AG04450 (cell line): ENCODE measurements at regions of chr11 and their contacts with region 1.

Region 1: DNA sequence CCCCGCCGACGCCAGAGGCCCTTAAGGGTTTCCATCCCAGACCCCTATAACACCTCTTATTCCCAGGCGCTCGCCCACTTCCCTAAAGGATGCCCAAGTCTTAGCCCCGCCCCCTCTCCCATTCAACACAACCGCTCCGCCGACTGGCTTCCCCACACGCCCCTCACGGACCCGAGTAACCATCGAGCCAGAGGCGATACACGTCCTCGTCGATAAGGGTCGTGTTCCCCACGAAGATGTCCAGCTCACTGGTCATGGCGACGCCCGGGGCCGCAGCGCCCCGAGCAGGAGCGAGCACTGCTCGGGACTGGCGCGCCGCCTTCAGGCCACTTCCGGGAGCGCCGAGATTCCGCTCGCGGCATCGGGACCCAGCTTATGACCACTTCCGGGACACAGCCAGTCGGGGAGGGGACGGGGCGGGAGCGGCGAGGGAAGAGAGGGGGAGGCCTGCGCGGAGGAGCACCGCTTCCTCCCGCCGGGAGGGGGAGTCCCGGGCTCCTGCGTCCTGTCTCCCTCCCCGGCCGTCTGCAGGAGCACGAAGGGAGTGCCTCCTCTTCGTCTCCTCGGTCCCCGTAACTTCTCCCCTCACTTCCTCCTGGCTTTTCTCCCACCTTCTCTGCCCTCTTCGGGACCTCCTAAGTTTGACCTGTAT is at the start of gene FIBP:
- DNase-seq: peak; percentile 94
- H3K4me3 ChIP-seq: peak within 1 kb of the TSS; percentile 90
- H3K27ac ChIP-seq: peak within 1 kb of the TSS; percentile 98
- H3K27me3 ChIP-seq: no peaks in the 10 kb centered on the region
- CTCF ChIP-seq: peak; percentile 74
- polyA plus RNA-seq, gene FIBP: 126 and 160 TPM in 2 replicates

Region 2: DNA sequence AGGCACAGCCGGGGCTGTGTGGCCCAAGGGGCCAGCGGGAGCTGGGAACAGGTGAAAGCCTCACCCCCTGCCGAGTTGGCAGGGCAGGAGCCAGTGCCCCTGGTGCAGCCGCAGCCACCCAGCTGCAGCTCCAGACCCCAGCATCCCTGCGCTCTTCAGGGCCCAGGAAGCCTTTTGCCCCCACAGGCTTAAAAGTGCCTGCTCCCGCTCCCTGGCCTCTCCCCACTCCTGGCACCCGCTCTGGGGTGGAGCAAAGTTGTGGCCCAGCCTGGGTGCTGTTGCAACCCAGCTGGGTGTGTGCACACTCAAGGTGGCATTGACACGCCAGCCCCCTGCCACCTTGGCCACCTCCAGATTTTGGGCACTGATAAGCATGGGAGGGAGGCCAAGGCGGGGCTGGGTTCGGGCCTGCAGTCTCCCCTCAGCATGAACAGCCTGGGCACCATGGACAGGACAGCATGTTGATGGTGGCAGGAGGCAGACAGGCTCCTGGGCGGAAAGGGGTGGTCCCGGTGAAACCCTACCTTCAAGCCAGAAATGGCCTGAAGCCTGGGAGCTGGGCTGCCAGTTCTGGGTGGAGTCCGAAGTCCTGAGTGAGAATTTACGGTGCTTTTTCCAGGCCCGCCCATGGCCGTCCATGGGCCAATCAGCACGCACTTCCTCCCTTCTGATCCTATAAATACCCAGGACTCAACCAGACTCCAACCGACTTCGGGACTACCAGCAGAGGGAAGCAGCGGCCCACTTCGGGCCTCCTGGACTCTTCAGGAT is 144.2 kb before region 1 on chr11:
- CTCF ChIA-PET with region 1: no interaction called
- POLR2A ChIA-PET with region 1: no interaction called
- DNase-seq: no peak
- H3K4me3 ChIP-seq: no peak overlapping the region
- H3K27ac ChIP-seq: no peak overlapping the region
- H3K27me3 ChIP-seq: peaks cover 13% of the 10 kb centered on the region
- CTCF ChIP-seq: 0 out of 2 replicates have a peak, but pooled peaks have one; percentile 7

Region 3: DNA sequence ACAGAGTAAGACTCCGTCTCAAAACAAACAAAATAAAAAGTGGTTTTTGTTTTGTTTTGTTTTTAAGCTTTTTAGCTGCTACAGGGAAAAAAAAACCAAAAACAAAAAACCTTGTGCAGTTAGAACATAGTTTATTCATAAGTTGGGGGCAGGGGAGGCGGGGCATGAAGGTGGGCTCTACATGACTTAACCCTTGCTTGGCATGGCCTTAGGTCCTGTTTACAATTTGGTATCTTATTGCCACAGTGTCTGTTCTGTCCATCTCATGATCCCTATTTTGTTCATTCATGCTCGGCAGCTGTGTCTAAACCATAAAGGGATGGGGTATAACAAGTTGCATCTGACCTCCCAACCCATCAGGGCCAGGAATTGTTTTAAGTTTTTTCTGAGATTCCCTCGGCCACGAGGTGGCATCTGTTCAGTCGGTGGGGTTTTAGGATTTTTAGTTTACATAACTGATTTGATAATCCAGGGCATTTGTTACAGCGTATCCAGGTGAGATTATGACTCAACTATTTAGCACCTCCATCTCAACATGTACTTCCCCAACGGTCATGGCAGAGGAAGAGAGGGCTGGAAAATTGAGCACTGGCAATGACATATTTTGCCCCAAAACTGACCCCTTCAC is 114.4 kb before region 1 on chr11:
- CTCF ChIA-PET with region 1: no interaction called
- POLR2A ChIA-PET with region 1: no interaction called
- DNase-seq: no peak
- H3K4me3 ChIP-seq: no peak overlapping the region
- H3K27ac ChIP-seq: no peak overlapping the region
- H3K27me3 ChIP-seq: no peaks in the 10 kb centered on the region
- CTCF ChIP-seq: peak; percentile 21; the same call in 1 of the 2 replicates

Region 4: GRCh38 chr11:65868076-65868667 is 20.1 kb before region 1 on chr11:
- CTCF ChIA-PET with region 1: interaction called, 51 read pairs
- POLR2A ChIA-PET with region 1: interaction called, 17 read pairs
- DNase-seq: no peak
- H3K4me3 ChIP-seq: no peak overlapping the region
- H3K27ac ChIP-seq: no peak overlapping the region
- H3K27me3 ChIP-seq: no peaks in the 10 kb centered on the region
- CTCF ChIP-seq: no peak

Region 5: DNA sequence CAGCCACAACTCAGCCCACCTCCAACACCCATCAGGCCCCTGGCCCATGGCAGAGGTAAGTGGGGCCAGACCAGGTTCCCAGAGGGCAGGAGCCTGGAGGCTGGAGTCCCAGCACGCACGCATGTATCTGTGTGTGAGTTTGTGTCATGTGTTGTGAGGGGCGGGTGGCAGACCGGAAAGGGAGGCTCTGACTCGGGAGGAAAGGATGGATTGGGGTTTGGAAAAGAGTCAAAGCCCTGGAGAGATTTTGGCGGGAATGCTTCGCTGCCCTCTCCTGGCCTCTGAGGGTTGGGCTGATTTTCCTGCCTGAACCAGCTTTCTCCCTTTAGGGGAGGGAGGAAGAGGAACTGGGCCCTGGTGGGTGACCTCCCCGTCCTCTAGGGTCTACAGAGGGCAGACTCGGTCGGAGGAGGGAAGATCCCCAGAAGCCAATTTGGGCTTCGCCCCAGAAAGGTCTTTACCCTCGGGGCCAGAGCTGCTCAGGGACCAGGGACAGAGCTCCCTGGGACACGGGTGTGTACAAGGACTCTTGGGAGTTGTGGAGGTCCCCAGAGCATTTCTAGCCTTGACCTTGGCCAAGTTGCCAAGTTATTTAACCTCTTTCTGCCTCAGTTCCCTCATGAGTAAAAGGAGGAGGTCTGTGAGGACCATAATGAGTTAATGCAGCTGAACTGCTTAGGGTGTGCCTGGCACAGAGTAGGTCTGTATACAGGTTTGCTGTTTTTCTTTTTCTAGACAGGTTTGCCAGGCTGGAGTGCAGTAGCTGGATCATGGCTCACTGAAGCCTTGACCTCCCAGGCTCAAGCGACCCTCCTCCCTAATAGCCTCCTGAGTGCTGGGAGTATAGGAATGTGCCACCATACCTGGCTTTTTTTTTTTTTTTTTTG is 23.6 kb after region 1 on chr11:
- CTCF ChIA-PET with region 1: interaction called, 15 read pairs
- POLR2A ChIA-PET with region 1: interaction called, 124 read pairs
- DNase-seq: no peak
- H3K4me3 ChIP-seq: no peak overlapping the region
- H3K27ac ChIP-seq: peak overlapping the region; percentile 91
- H3K27me3 ChIP-seq: no peaks in the 10 kb centered on the region
- CTCF ChIP-seq: peak; percentile 17; the same call in 1 of the 2 replicates

Region 6: GRCh38 chr11:65961232-65961901 is 73.1 kb after region 1 on chr11 and contains the start of gene SART1:
- CTCF ChIA-PET with region 1: interaction called, 21 read pairs
- POLR2A ChIA-PET with region 1: interaction called, 5 read pairs
- DNase-seq: peak; percentile 95
- H3K4me3 ChIP-seq: peak within 1 kb of the TSS; percentile 89
- H3K27ac ChIP-seq: peak within 1 kb of the TSS; percentile 85
- H3K27me3 ChIP-seq: no peaks in the 10 kb centered on the region
- CTCF ChIP-seq: no peak
- polyA plus RNA-seq, gene SART1: 14.3 and 15.7 TPM in 2 replicates

Region 7: DNA sequence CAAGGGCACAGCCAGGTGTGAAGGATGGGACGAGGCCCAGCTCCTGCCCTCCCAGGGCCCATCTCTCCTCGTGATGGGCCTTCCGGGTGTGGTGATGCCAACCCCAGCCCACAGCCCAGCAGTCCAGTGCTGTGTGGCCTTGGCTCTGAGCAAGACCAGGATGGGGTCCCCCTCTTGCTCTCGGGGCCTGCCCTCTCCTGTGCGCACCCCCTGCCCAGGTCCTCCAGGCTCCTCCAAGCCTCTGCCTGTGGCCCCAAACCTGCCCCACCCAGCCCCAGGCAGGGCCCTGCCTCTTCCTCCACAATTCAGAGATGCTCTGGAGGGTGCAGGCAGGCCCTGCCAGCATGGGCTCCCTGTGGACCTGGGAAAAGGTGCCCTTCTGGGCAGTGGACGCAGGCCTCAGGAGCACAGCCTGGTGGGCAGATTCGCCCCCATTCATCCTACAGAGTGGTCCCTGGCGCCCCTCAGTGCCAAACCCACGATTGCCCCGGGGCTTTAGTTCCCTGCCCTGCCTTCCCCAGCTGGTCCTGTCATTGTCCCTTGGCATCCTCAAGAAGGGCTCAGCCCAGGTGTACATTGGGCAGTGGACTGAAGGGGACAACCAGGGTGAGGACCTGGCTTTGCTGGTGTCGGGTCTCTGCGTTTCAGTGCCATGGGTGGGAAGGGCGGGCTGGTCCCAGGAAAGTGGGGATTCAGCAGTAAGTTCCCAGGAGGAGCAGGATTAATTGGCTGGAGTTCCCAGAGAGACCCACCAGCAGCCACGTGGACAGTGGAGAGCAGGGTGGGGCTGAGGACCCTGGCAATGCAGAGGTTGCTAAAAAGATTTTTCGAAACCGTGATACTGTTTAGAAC is 93.9 kb after region 1 on chr11:
- CTCF ChIA-PET with region 1: interaction called, 29 read pairs
- POLR2A ChIA-PET with region 1: interaction called, 3 read pairs
- DNase-seq: no peak
- H3K4me3 ChIP-seq: no peak overlapping the region
- H3K27ac ChIP-seq: no peak overlapping the region
- H3K27me3 ChIP-seq: no peaks in the 10 kb centered on the region
- CTCF ChIP-seq: no peak

Region 8: DNA sequence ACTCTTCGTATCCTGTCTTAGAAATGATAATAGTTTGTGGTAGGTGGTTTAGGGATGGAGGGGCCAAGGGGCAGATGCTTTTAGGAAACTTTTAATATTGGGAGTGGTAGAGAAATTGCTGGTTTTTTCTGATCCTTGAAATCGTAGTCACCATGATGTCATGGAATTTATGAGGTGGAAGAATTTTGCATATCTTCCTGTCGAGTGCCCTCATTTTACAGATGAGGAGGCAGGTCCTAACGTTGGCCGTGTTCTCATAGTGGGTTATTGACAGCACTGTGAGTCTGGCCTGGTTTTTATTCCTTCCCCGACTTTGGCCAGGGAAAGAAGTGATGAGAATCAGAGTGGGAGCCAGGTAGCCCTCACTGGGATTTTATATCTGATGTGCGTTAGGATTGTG is 172.9 kb after region 1 on chr11:
- CTCF ChIA-PET with region 1: no interaction called
- POLR2A ChIA-PET with region 1: no interaction called
- DNase-seq: no peak
- H3K4me3 ChIP-seq: no peak overlapping the region
- H3K27ac ChIP-seq: no peak overlapping the region
- H3K27me3 ChIP-seq: no peaks in the 10 kb centered on the region
- CTCF ChIP-seq: no peak